Tibial artery (tissue), 4 donors: ENCODE measurements at regions of chr10 and their contacts with region 1.

Region 1: DNA sequence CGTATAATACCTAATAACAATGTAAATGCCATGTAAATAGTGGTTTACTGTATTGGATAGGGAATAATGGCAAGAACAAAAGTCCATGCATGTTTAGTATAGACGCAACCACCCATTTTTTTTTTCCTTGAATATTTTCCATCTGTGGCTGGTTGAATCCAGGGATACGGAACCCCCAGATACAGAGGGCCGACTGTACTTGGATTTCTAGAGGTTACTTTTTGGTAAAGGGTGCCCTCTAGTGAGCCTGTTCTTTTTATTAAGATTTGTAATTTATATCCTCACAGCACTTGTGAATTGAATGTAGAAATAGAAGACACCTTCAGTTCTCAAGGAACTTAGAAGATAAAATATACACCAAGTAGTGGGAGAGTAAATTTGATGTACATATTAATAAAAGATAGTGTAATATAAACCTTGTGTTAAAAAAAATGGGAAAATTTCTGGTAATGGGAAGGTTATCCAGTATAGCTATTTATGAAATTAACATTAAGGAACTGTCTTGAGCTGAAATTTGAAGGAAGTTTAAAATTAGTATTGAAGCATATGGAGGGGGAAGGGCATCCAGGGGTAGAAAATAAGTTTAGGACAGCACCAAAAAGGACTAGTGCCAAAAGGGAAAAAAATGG is 32.0 kb downstream of the EXOC6 start:
- DNase-seq: no peak
- H3K4me3 ChIP-seq: no peak overlapping the region
- H3K27ac ChIP-seq: no peak overlapping the region
- H3K4me1 ChIP-seq: no peaks in the 10 kb centered on the region
- H3K27me3 ChIP-seq: no peaks in the 10 kb centered on the region
- CTCF ChIP-seq: peak; percentile 35 to 39

Region 2: DNA sequence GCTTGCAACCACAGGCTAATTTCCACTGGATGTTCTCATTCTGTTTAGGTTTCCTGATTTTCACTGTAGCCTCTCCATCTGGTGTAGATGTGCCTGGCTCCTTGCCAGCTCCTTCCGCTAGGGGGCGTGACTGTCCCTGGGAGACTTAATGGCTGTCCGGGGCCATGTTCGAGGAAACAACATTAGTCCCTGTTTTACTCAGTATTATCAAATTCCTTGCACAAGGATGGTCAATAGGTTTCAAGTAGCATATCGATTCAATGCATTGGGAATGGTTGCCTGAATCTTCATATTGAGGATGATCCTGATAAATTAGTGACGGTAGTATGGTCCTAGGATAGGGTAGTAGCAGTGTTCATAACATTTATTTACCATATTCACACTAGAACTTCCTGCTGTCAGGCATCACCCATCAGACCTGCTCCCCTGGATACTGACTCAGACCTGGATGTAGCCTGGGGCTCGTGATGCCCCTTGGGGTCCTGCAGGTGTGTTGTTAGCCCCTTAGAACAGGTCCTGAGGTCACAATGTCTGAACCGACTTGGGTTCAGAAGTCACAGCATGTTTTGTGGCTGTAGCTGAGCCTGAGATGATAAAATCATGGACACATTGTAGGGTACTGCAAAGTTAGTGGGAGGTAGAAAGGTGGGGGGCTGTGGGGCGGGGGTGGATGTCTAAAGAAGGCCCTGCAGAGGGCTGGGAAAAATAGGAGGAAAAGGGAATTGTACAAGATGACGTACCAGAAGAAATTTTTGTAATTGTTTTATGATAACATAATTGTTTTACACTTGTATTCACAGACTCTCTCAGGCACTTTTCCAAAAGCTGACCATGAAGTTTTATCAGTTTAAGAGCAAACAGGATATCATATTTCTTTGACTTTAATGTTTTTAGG is 40.9 kb before region 1 on chr10:
- intact Hi-C with region 1: loop called (anchors 5 kb)
- DNase-seq: peak in 1 of 2 donors; percentile 33
- H3K4me3 ChIP-seq: no peak overlapping the region
- H3K27ac ChIP-seq: no peak overlapping the region
- H3K4me1 ChIP-seq: peaks cover 0 to 5% (median 0%) of the 10 kb centered on the region in 4 donors
- H3K27me3 ChIP-seq: no peaks in the 10 kb centered on the region
- CTCF ChIP-seq: no peak

Region 3: DNA sequence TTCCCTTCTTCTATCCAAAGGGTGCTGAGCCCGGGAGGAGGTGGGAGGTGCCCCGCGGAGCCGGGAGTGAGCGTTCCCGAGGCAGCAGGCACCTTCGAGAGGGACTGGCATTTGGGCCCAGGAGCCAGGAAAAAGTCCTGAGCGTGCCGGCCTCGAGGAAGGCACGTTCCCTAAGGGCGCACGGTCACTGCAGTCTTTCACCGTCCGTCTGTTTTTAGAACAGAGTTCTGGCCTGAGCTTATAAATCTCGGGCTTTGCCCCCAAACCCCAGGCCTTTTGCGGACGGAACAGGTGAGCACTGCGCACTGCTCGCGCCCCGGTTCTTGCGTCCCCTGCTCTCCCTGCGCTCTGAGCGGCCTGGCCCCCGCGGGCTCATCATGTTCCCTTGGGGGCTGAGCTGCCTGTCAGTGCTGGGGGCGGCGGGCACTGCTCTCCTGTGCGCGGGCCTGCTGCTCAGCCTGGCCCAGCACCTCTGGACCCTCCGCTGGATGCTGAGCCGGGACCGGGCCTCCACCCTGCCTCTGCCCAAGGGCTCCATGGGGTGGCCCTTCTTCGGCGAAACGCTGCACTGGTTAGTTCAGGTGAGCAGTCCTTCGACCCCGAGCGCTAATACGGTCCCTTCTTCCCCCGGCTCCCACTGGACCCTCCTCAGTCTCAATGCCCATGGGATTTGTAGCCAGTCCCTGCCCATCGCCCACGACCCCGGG is 180.7 kb after region 1 on chr10:
- intact Hi-C with region 1: no loop called
- DNase-seq: peak in 1 of 2 donors; percentile 61
- H3K4me3 ChIP-seq: no peak overlapping the region
- H3K27ac ChIP-seq: no peak overlapping the region
- H3K4me1 ChIP-seq: peaks cover 0 to 41% (median 29%) of the 10 kb centered on the region in 4 donors
- H3K27me3 ChIP-seq: peaks cover 0 to 65% of the 10 kb centered on the region in 2 donors
- CTCF ChIP-seq: no peak